ENCODE measurements at regions of chr1 and their contacts with region 1.

Region 1: GRCh38 chr1:204443866-204444581 is 32.4 kb upstream of the PPP1R15B start:
- DNase-seq: no peak
- H3K4me3 ChIP-seq: no peak overlapping the region
- CTCF ChIP-seq: no peak

Region 2: GRCh38 chr1:204390751-204391466 is 53.1 kb before region 1 on chr1:
- in situ Hi-C with region 1: no loop called
- DNase-seq: no peak
- H3K4me3 ChIP-seq: no peak overlapping the region
- CTCF ChIP-seq: no peak

Region 3: GRCh38 chr1:204487256-204487615 is 43.2 kb after region 1 on chr1:
- in situ Hi-C with region 1: loop called (anchors 5 kb)
- DNase-seq: no peak
- H3K4me3 ChIP-seq: no peak overlapping the region
- CTCF ChIP-seq: no peak

Measured in astrocyte of the cerebellum (primary cell).